MCF 10A (cell line): ENCODE measurements at regions of chr6 and their contacts with region 1.

Region 1: GRCh38 chr6:27617700-27618689 is 145.1 kb upstream of the ZNF184 start:
- DNase-seq: peak; percentile 68
- H3K4me3 Mint-ChIP-seq: peak overlapping the region; percentile 89
- H3K27ac Mint-ChIP-seq: peak overlapping the region; percentile 86
- H3K4me1 Mint-ChIP-seq: peaks cover 6% of the 10 kb centered on the region
- H3K27me3 Mint-ChIP-seq: no peaks in the 10 kb centered on the region
- CTCF ChIP-seq: peak; percentile 9

Region 2: DNA sequence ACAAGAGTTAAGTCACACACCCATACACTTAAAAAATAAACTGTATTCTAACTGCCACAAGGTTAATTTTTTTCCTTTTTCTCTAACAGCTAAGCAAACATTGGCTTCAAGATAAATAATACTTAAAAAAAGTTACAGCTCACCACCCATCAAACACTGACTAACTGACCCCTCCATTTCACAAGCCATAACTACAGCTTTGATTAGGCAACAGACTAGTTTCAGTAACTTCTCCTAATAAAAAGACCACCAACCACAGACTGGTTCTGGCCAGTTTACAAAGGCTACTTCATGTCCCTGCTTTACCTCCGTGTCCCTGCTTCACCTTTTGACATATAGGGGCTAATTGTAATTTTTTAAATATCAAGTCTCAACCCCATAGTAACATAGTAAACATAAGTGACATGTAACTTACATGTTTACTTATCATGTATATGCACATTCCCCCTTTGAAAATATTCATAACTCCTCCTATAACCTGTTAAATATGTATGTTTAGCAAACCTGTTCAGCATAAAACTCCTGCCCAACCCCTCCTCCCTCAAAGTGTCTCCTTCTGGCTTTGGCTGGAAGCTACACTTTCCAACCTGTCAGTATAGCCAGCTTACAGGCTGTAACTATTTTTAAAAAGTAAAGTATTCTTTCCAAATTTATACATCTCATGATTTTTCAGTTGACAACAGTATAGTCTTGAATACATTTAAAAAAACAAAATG is 290.8 kb before region 1 on chr6:
- CTCF ChIA-PET with region 1: no interaction called
- POLR2A ChIA-PET with region 1: no interaction called
- intact Hi-C with region 1: no loop called
- DNase-seq: no peak
- H3K4me3 Mint-ChIP-seq: no peak overlapping the region
- H3K27ac Mint-ChIP-seq: no peak overlapping the region
- H3K4me1 Mint-ChIP-seq: peaks cover 1% of the 10 kb centered on the region
- H3K27me3 Mint-ChIP-seq: no peaks in the 10 kb centered on the region
- CTCF ChIP-seq: no peak

Region 3: DNA sequence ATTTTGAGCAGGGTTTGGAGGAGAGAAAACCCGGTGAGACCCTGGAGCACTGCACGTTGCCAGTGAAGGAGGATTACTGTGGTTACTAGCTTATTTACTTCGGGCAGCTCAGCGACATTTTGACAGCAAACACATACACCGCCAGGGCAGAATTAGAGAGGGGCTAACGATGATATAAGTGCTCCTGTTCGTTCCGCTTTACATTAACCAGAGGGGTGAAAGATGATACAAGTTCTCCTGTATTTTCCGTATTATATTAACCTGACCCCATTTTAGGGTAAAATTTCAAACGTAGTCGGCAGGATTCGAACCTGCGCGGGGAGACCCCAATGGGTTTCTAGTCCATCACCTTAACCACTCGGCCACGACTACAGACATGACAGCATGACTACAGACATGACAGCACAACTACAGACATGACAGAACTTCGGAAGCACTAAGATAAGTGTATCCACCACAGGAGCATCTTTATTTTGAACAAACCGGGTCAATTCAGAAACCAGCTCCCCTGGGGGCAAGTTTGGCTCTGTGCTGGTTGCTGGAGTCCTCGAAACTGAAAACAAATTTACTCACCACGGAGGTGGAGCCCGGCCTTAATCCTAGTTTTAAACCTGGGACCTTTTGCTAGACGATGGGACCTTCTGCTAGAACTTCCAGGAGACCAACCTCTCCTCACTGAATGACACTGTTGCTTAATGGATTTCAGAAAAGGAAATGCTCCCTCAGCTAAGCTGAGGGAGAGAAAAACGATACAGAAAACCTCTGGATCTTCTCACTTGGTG is 64.7 kb before region 1 on chr6:
- CTCF ChIA-PET with region 1: no interaction called
- POLR2A ChIA-PET with region 1: interaction called, 11 read pairs
- intact Hi-C with region 1: no loop called
- DNase-seq: peak; percentile 75
- H3K4me3 Mint-ChIP-seq: peak overlapping the region; percentile 74
- H3K27ac Mint-ChIP-seq: peak overlapping the region; percentile 40
- H3K4me1 Mint-ChIP-seq: no peaks in the 10 kb centered on the region
- H3K27me3 Mint-ChIP-seq: no peaks in the 10 kb centered on the region
- CTCF ChIP-seq: no peak

Region 4: GRCh38 chr6:27672113-27672799 is 54.3 kb after region 1 on chr6:
- CTCF ChIA-PET with region 1: interaction called, 3 read pairs
- POLR2A ChIA-PET with region 1: interaction called, 34 read pairs
- intact Hi-C with region 1: loop called (anchors 5 kb)
- DNase-seq: peak; percentile 84
- H3K4me3 Mint-ChIP-seq: peak overlapping the region; percentile 76
- H3K27ac Mint-ChIP-seq: peak overlapping the region; percentile 77
- H3K4me1 Mint-ChIP-seq: peaks cover 12% of the 10 kb centered on the region
- H3K27me3 Mint-ChIP-seq: no peaks in the 10 kb centered on the region
- CTCF ChIP-seq: no peak

Region 5: GRCh38 chr6:27908017-27908416 is 290.0 kb after region 1 on chr6:
- CTCF ChIA-PET with region 1: no interaction called
- POLR2A ChIA-PET with region 1: no interaction called
- intact Hi-C with region 1: no loop called
- DNase-seq: no peak
- H3K4me3 Mint-ChIP-seq: no peak overlapping the region
- H3K27ac Mint-ChIP-seq: no peak overlapping the region
- H3K4me1 Mint-ChIP-seq: peaks cover 5% of the 10 kb centered on the region
- H3K27me3 Mint-ChIP-seq: no peaks in the 10 kb centered on the region
- CTCF ChIP-seq: no peak